Ovary (tissue), 10 donors: ENCODE measurements at regions of chr15 and their contacts with region 1.

Region 1: GRCh38 chr15:31215490-31216214 is 111.0 kb upstream of the KLF13 start:
- DNase-seq: peak; percentile 66 to 87 (median 75)
- H3K4me3 ChIP-seq: peak overlapping the region; percentile 42
- H3K27ac ChIP-seq: peak overlapping the region; percentile 75 to 81
- H3K4me1 ChIP-seq: peaks cover 8% of the 10 kb centered on the region
- H3K27me3 ChIP-seq: no peaks in the 10 kb centered on the region
- CTCF ChIP-seq: peak; percentile 57 to 79 (median 72)
- EP300 ChIP-seq: no peak
- POLR2A ChIP-seq: no peak

Region 2: DNA sequence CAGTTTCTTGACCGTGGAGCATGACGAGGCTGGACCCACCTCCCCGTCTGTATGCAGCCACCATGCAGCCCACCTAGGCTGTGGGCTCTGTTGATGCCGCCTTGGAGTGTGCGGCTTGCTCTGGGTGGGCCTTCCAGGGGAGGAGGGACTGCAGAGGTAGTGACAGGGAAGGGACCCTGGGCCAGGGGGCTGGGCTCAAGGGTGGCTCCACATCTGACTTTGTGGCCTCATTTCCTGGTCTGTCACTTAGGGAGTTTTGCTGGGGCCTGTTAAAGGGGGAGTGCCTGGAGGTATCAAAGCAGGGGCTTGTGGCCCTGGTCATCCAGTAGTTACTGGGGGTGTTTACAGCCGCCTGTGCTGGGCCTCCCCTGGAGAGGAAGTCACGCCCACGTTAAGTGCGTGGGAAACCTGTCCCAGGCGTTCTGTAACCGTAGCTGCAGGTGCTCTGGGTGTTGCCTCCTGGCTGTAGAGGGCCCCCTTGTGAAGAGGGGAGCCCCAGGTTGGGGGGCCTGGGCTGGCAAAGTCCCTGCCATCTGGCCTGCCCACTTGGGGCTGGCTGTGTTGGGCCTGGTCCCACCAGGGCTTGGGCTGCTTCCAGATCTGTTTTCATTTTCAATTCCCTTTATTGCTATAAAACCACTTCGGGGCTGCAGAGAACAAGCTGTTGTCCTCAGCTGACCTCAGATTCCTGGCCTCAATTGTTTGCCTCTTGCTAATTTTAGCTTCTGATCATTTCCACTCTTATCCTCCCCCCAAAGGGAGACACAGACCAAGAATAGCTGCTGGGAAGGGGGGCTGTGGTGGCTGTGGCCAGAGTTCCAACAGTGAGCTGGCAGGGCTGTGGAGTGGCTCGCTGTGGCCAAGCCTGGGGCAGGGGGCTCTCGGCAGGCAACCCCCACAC is 137.5 kb after region 1 on chr15:
- intact Hi-C with region 1: loop called in 1 of 4 experiments (anchors 10 kb)
- DNase-seq: peak; percentile 52 to 79 (median 72)
- H3K4me3 ChIP-seq: no peak overlapping the region
- H3K27ac ChIP-seq: peak overlapping the region; percentile 41 to 95
- H3K4me1 ChIP-seq: peaks cover 17% of the 10 kb centered on the region
- H3K27me3 ChIP-seq: no peaks in the 10 kb centered on the region
- CTCF ChIP-seq: no peak
- EP300 ChIP-seq: no peak
- POLR2A ChIP-seq: no peak